ENCODE measurements at regions of chr1 and their contacts with region 1.

Region 1: DNA sequence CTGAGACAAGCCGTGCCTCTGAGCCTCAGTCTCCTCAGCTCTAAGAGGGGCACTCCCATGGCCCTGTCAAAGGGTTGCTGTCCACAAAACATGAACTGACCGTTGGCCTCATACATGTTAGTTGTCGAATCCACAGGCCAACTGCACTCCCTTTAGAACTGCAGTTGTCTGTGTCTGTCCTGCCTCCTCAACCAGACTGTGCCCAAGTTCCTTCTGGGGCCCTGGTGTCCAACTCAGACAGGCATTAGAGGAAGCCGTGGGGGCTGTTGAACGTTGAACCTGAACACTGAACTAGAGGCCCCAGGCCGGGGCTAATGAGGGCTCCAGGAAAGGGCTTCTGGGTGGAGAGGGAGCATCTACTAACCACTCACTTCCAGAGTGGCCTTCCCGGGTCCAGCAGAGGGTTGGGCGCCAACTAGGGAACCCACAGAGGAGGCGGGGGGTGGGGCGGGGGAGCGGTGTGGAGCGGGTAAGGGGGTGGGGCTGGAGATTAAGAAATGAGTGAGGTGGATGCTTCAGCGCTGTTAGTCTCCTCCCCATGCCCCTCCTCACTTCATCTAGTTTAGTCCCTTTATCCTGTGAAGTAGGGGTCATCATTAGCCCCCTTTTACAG is at the start of gene RAB42:
- DNase-seq: peak; percentile 82
- ATAC-seq: peak; percentile 81
- H3K4me3 ChIP-seq: peak within 1 kb of the TSS; percentile 57
- H3K27ac ChIP-seq: no peak within 1 kb of the TSS
- H3K4me1 ChIP-seq: peaks cover 5% of the 10 kb centered on the region
- H3K27me3 ChIP-seq: no peaks in the 10 kb centered on the region
- CTCF ChIP-seq: no peak
- total RNA-seq, gene RAB42: 5.5 TPM

Region 2: GRCh38 chr1:27830621-27831424 is 761.0 kb before region 1 on chr1 and contains the start of gene PPP1R8:
- intact Hi-C with region 1: no loop called
- DNase-seq: peak; percentile 96
- ATAC-seq: peak; percentile 100
- H3K4me3 ChIP-seq: peak within 1 kb of the TSS; percentile 98
- H3K27ac ChIP-seq: peak within 1 kb of the TSS; percentile 90
- H3K4me1 ChIP-seq: peaks cover 13% of the 10 kb centered on the region
- H3K27me3 ChIP-seq: no peaks in the 10 kb centered on the region
- CTCF ChIP-seq: no peak
- total RNA-seq, gene PPP1R8: 33.0 TPM

Region 3: DNA sequence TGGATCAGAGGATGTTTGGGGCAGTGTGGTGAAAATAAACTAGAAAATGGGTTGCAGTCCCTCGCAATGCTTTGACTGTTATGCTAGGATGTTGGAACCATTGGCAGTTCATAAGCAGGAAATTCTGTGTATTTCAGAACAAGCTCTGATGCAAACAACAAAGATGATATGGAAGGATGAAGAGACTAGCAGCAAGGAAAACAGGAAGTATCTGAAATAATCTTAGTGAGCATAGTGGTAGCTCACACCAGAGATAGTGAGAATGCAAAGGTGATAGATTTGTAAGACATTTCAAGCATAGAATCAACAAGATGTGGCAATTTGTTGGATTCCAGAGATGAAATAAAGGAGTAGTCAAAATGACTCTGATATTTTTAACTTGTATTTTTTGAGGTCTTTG is 97.1 kb before region 1 on chr1:
- intact Hi-C with region 1: no loop called
- DNase-seq: no peak
- ATAC-seq: no peak
- H3K4me3 ChIP-seq: no peak overlapping the region
- H3K27ac ChIP-seq: no peak overlapping the region
- H3K4me1 ChIP-seq: no peaks in the 10 kb centered on the region
- H3K27me3 ChIP-seq: no peaks in the 10 kb centered on the region
- CTCF ChIP-seq: no peak

Region 4: DNA sequence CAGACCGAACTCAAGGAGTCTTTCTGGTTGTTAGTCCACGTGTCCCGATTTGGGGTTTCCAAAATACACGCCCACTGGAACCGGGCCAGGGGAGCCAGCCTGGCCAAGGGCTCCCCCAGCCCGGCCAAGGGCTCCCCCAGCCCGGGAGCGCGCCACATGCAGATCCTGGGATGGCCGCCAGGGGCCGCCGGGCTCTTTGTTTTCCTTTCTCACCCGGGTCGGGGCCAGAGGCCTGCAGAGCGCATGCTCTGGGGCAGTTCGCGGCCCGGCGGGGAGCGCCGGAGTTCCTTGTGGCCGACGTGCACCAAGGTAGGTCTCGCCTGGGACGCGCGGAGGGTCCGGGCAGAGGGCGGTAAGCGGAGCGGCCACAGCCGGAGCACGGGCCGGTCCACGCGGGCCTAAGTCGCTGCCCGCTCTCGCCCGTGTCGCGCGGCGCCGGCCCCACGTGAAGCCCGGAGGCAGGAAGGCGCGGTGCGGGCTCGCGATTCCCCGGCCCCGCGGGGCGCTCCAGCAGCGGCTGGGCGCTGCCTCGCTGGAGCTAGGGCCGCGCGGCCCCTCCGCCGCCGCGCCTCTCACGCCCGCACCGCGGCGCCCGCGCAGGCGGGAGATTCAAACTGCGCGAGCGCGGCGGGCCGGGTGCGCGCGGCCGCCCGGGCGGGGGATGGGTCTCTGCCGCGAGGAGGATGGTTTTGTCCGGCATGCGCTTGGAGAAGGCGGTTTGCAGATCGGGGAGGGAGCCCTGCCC is 73.6 kb before region 1 on chr1:
- intact Hi-C with region 1: loop called (anchors 10 kb)
- DNase-seq: peak; percentile 95
- ATAC-seq: peak; percentile 97
- H3K4me3 ChIP-seq: peak overlapping the region; percentile 72
- H3K27ac ChIP-seq: peak overlapping the region; percentile 78
- H3K4me1 ChIP-seq: peaks cover 14% of the 10 kb centered on the region
- H3K27me3 ChIP-seq: no peaks in the 10 kb centered on the region
- CTCF ChIP-seq: peak; percentile 100

Region 5: DNA sequence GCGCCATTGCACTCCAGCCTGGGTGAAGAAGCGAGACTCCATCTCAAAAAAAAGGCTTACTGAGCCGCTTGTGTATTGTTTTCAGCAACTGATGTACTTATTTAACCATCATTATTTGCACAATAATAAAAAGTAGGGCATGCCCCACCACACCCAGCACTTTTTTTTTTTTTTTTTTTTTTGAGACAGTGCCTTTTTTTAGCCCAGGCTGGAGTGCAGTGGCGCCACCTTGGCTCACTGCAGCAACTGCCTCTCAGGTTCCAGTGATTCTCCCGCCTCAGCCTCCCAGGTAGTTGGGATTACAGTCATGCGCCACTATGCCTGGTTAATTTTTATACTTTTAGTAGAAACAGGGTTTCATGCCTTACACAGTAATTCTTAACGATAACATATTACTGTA is 51.2 kb before region 1 on chr1:
- intact Hi-C with region 1: no loop called
- DNase-seq: no peak
- ATAC-seq: no peak
- H3K4me3 ChIP-seq: no peak overlapping the region
- H3K27ac ChIP-seq: no peak overlapping the region
- H3K4me1 ChIP-seq: no peaks in the 10 kb centered on the region
- H3K27me3 ChIP-seq: no peaks in the 10 kb centered on the region
- CTCF ChIP-seq: no peak